H1 (cell line): ENCODE measurements at regions of chr4 and their contacts with region 1.

Region 1: GRCh38 chr4:127965062-127965802 is at the starts of genes ABHD18 and MFSD8:
- DNase-seq: peak; percentile 98 to 99
- H3K4me3 ChIP-seq: peak within 1 kb of the TSS; percentile 58 to 99 (median 88)
- H3K27ac ChIP-seq: peak within 1 kb of the TSS; percentile 78
- H3K4me1 ChIP-seq: peaks cover 0 to 3% (median 0%) of the 10 kb centered on the region in 4 experiments; a peak in 2 of 7 replicates
- H3K27me3 ChIP-seq: no peaks in the 10 kb centered on the region
- CTCF ChIP-seq: peak; percentile 43 to 60 (median 49)
- EP300 ChIP-seq: peak in 1 of 2 experiments; percentile 54; a peak in 1 of 3 replicates
- POLR2A ChIP-seq: peak in 1 of 2 experiments; percentile 69; a peak in 2 of 3 replicates
- RAD21 ChIP-seq: peak; percentile 34 to 53
- total RNA-seq, gene ABHD18: 15.9 and 17.0 TPM in 2 replicates
- total RNA-seq, gene MFSD8: 15.8 and 24.3 TPM in 2 replicates

Region 2: GRCh38 chr4:127782274-127783025 is 182.8 kb before region 1 on chr4 and contains the start of gene HSPA4L:
- CTCF ChIA-PET with region 1: interaction called, 3 read pairs
- POLR2A ChIA-PET with region 1: interaction called, 11 read pairs
- DNase-seq: no peak
- H3K4me3 ChIP-seq: peak within 1 kb of the TSS; percentile 52 to 80 (median 70)
- H3K27ac ChIP-seq: no peak within 1 kb of the TSS
- H3K4me1 ChIP-seq: peaks cover 0 to 8% (median 1%) of the 10 kb centered on the region in 4 experiments; a peak in 5 of 7 replicates
- H3K27me3 ChIP-seq: peaks cover 7 to 34% (median 25%) of the 10 kb centered on the region in 4 experiments
- CTCF ChIP-seq: peak; percentile 27 to 42 (median 33); a peak in 3 of 4 replicates
- EP300 ChIP-seq: no peak
- POLR2A ChIP-seq: peak; percentile 81 to 85
- RAD21 ChIP-seq: peak; percentile 44 to 62
- total RNA-seq, gene HSPA4L: 4.6 and 4.7 TPM in 2 replicates

Region 3: DNA sequence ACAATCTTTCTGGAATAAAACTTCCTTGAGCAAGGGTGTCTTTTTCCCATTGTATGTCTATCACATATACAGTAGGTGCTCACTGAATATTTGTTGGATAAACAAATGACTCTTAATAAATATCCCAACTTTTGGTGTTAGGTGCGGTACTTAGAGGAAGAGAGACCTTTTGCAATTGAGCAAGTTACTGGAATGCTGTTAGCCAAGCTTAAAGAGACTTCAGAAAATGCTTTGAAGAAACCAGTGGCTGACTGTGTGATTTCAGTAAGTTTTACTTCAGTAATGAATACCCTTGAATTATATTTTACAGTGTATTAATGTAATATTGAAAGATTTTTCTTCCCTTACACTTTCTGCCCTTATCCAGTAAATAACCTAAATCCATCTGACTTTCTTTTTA is 166.8 kb before region 1 on chr4:
- CTCF ChIA-PET with region 1: no interaction called
- POLR2A ChIA-PET with region 1: no interaction called
- DNase-seq: no peak
- H3K4me3 ChIP-seq: no peak overlapping the region
- H3K27ac ChIP-seq: no peak overlapping the region
- H3K4me1 ChIP-seq: no peaks in the 10 kb centered on the region
- H3K27me3 ChIP-seq: no peaks in the 10 kb centered on the region
- CTCF ChIP-seq: no peak
- EP300 ChIP-seq: no peak
- POLR2A ChIP-seq: no peak
- RAD21 ChIP-seq: no peak

Region 4: DNA sequence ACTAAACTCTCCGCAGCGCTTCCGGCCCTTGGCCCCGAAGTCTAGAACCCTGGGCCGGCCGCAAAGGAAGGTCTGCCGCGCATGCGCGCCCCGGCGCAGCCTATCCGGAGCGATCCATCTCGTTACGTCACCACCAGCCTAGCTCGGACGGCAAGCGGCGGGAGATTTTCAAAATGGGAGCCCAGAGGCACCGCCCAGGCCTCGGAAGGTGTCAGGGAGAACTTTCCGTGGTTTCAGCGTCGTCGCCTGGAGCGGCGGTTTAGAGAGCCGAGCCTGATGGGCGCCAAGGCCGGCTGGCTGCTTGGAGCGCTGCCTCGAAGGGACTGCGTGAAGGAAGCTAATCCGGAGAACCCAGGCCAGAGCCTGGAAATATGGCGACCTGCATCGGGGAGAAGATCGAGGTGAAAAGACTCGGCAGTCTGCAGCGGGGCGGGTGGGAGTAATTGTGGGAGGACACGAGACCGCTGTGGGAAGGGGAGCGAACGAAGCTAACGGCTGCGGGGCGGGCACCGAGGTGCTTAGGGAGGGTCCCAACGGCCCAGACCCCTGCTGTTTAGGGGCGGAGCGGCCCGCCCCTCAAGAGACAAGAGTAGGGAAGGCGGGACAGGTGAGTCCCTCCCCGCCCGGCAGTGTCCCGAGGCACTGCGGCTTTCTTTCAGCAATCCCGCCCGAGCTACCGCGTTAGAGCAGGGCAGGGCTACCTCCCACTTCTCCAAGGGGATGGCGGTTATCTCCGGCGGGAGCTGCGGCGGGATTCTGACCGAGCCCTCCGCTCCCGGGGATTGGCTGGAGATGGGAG is 84.3 kb before region 1 on chr4 and contains the start of gene PLK4:
- CTCF ChIA-PET with region 1: interaction called, 3 read pairs
- POLR2A ChIA-PET with region 1: interaction called, 17 read pairs
- DNase-seq: peak; percentile 96
- H3K4me3 ChIP-seq: peak within 1 kb of the TSS; percentile 92 to 96 (median 94)
- H3K27ac ChIP-seq: peak within 1 kb of the TSS; percentile 100
- H3K4me1 ChIP-seq: no peaks in the 10 kb centered on the region; a peak in 1 of 7 replicates
- H3K27me3 ChIP-seq: no peaks in the 10 kb centered on the region
- CTCF ChIP-seq: no peak
- EP300 ChIP-seq: no peak
- POLR2A ChIP-seq: peak; percentile 92 to 95
- RAD21 ChIP-seq: no peak
- total RNA-seq, gene PLK4: 35.2 and 38.7 TPM in 2 replicates

Region 5: GRCh38 chr4:127975121-127975770 is 10.0 kb after region 1 on chr4:
- CTCF ChIA-PET with region 1: no interaction called
- POLR2A ChIA-PET with region 1: interaction called, 10 read pairs
- DNase-seq: no peak
- H3K4me3 ChIP-seq: no peak overlapping the region
- H3K27ac ChIP-seq: no peak overlapping the region
- H3K4me1 ChIP-seq: peaks cover 0 to 3% (median 2%) of the 10 kb centered on the region in 4 experiments; a peak in 2 of 7 replicates
- H3K27me3 ChIP-seq: no peaks in the 10 kb centered on the region
- CTCF ChIP-seq: no peak
- EP300 ChIP-seq: no peak
- POLR2A ChIP-seq: no peak
- RAD21 ChIP-seq: no peak

Region 6: DNA sequence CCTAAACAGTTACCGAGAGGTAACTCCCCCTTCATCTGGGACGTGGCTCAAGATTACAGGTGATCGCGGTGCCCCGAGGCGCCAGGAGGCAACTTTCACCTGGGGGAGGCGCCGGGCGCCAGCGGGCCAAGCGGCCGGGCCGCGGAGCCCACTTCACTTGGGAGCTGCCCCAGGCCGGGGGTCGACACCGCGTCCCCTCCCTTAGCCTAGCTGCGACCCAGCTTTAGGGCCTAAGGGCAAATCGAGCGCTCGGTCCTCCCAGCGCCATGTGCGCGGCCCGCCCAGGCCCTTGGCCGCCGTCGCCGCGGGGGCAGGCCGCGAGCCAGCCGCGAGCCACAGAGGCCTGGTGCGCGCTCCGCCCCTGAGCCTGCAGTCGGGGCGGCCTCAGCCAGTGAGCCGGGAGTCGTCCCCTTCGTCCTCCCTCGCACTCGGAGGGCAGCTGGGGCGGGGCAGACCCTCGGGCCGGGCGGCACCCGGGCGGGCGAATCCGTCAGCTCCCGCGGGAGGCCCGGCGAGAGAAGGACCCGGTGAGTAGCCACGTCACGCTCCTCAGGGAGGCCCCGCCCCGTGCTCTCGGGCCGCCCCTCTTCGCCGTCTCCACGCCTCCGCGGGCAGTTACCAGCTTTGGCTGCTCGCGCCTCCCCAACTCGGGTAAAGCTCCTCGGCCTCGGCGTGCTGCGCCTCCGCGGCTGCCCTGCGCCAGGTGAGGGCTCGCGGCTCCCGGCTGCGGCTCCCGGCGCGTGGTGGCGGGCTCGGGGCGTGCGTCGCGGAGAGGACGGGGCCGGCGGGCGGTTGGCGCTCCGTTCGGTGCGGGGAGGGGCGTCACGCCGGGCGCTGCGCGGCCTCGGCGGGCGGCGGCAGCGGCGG is 95.7 kb after region 1 on chr4 and contains the start of gene LARP1B:
- CTCF ChIA-PET with region 1: interaction called, 3 read pairs
- POLR2A ChIA-PET with region 1: interaction called, 33 read pairs
- DNase-seq: peak; percentile 85 to 96
- H3K4me3 ChIP-seq: peak within 1 kb of the TSS; percentile 59 to 81 (median 76)
- H3K27ac ChIP-seq: peak within 1 kb of the TSS; percentile 96
- H3K4me1 ChIP-seq: peaks cover 0 to 8% (median 0%) of the 10 kb centered on the region in 4 experiments; a peak in 3 of 7 replicates
- H3K27me3 ChIP-seq: no peaks in the 10 kb centered on the region
- CTCF ChIP-seq: no peak
- EP300 ChIP-seq: no peak
- POLR2A ChIP-seq: peak; percentile 89 to 96
- RAD21 ChIP-seq: no peak
- total RNA-seq, gene LARP1B: 44.8 and 47.0 TPM in 2 replicates